Lower leg skin (tissue), 4 donors: ENCODE measurements at regions of chr9 and their contacts with region 1.

Region 1: DNA sequence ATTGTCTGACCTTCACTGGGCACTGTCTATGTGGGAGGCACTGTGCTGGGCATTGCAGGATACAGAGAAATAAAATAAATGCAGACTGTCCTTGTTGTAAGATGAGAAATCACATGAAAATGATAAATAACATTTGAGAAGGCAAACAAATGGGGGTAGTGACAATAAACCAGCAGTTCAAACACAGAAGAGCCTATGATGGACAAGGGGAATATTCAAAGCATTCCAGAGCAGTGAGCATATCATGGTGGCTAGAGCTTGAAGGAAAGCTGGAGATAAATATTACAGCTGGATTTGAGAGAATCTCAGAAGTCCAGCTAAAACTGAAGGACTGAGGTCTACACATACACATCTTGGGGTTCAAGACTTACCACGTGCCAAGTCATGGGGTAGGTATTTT is 209.9 kb downstream of the ASTN2 start:
- DNase-seq: no peak
- H3K4me3 ChIP-seq: no peak overlapping the region
- CTCF ChIP-seq: no peak
- POLR2A ChIP-seq: no peak

Region 2: GRCh38 chr9:118459913-118460312 is 1254.9 kb after region 1 on chr9:
- intact Hi-C with region 1: loop called (anchors 5 kb)
- DNase-seq: no peak
- H3K4me3 ChIP-seq: no peak overlapping the region
- CTCF ChIP-seq: no peak
- POLR2A ChIP-seq: no peak